Mucosa of descending colon (tissue), 3 donors: ENCODE measurements at regions of chr5 and their contacts with region 1.

Region 1: GRCh38 chr5:14476786-14477435 is 104.7 kb upstream of the OTULINL start:
- DNase-seq: no peak
- ATAC-seq: no peak
- H3K4me3 ChIP-seq: no peak overlapping the region
- H3K4me1 ChIP-seq: no peaks in the 10 kb centered on the region
- CTCF ChIP-seq: no peak

Region 2: DNA sequence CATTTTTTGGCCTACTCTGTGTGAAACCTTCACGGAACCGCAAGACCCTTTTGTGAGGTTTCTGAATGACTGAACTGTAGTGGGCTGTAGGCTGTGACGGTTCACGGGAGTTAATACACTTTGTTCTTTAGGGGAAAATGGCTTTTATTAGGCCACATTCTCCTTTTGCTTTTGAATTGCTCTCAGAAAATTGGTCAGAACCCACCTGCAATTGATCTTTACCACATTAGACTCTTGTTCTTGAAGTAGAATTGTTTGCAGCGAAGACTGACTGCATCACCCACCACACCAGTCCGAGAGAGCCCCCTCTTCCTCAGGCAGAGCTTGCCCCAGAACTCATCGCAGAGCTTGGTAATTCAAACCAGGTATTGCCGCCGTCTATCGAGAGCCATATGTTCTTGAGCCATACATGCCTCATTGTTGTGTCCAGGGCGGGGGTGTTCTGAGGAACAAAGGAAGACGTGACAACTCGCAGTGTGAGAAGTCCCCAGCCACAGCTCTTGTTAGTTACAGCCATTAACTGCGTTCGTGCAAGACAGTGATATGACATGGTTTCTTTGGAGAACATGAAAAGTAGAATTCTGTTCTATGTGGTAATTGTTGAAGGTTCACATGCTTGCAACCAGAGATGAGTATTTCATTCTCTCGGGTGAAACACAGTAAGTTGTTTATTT is 61.8 kb before region 1 on chr5:
- intact Hi-C with region 1: loop called in 1 of 2 experiments (anchors 10 kb)
- DNase-seq: no peak
- ATAC-seq: no peak
- H3K4me3 ChIP-seq: no peak overlapping the region
- H3K4me1 ChIP-seq: no peaks in the 10 kb centered on the region
- CTCF ChIP-seq: no peak